Endothelial cell of umbilical vein (primary cell): ENCODE measurements at regions of chr19 and their contacts with region 1.

Region 1: GRCh38 chr19:14405758-14406644 is 13.1 kb downstream of the DDX39A start:
- DNase-seq: peak; percentile 93
- H3K4me3 ChIP-seq: peak overlapping the region in 1 of 3 experiments; percentile 9
- H3K27ac ChIP-seq: no peak overlapping the region
- H3K4me1 ChIP-seq: no peaks in the 10 kb centered on the region
- H3K27me3 ChIP-seq: no peaks in the 10 kb centered on the region
- CTCF ChIP-seq: peak; percentile 36 to 92
- POLR2A ChIP-seq: no peak

Region 2: DNA sequence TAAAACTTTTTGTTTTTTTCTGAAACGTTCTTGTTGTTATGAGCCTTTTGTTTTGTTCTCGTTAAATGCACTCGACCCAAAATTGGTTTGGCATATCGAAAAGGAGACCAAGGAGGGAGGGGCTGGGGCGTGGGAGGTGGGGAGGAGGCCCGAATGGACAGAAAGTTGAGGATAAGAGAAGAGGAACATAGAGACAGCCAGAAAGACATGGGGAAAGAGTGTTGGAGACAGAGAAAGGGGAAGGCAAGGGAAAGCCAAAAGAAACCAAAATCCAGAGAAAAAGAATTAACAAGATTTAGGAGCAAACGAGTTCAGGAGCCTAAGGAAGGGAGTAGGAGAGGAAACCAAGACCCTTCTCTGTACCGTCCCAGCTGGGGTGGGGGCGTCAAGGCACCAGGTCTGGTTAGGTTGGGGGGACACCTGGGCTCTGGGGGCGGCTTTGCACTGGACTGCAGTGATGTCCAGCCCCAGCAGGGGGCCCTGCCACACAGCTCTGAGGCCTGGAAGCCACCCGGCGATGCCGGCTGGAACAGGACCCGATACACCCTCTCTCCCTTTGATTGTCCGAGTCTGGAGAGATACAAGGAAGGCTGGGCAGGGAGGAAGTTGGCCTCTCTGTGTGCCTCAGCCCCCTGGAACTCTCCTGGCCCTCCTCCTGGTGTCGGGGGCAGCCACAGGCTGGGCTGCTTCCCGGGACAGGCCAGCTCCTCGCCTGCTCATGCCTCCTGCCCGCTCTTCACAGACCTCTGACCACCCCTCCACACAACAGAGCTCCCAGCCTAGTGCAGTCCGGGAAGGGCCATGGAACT is 258.0 kb before region 1 on chr19:
- CTCF ChIA-PET with region 1: interaction called, 16 read pairs
- POLR2A ChIA-PET with region 1: no interaction called
- dilution Hi-C with region 1: no loop called
- intact Hi-C with region 1: loop called (anchors 1 kb)
- DNase-seq: peak; percentile 77
- H3K4me3 ChIP-seq: no peak overlapping the region
- H3K27ac ChIP-seq: peak overlapping the region; percentile 43
- H3K4me1 ChIP-seq: peaks cover 24% of the 10 kb centered on the region
- H3K27me3 ChIP-seq: no peaks in the 10 kb centered on the region
- CTCF ChIP-seq: peak; percentile 86 to 98
- POLR2A ChIP-seq: no peak

Region 3: GRCh38 chr19:14198384-14199376 is 207.3 kb before region 1 on chr19:
- CTCF ChIA-PET with region 1: interaction called, 12 read pairs
- POLR2A ChIA-PET with region 1: no interaction called
- dilution Hi-C with region 1: no loop called
- intact Hi-C with region 1: loop called (anchors 1 kb)
- DNase-seq: no peak
- H3K4me3 ChIP-seq: no peak overlapping the region
- H3K27ac ChIP-seq: no peak overlapping the region
- H3K4me1 ChIP-seq: no peaks in the 10 kb centered on the region
- H3K27me3 ChIP-seq: no peaks in the 10 kb centered on the region
- CTCF ChIP-seq: peak in 1 of 2 donors; percentile 2
- POLR2A ChIP-seq: no peak

Region 4: DNA sequence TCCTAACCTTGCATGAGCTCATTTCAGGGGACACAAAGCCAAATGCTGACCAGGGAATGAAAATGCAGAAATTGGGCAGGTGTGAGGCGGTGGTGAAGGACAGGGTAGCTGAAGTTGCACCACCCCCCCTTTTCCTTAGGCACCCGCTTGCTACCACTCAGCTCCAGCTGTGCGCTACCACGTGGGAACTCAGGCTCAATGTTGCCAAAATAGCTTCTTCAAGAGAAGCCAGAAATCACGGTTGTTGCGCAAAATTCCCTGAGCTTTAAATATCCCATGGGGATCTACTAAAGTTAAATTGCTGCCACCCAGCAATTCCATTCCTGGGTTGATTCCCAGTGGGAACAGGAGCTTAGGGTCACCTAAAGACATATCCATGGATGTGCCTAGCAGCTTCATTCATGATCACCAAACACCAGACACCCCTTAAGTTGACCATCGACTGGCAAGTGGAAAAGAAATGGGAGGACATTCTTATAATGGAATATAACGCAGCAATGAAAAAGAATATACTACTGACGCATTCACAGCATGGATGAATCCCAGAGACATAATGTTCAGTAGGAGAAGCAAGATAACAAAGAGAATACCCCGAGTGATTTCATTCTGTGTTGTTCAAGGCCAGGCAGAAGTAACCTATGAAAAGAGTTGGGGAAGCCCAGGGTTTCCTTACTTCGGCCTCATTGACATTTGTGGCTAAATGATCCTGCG is 187.2 kb before region 1 on chr19:
- CTCF ChIA-PET with region 1: interaction called, 5 read pairs
- POLR2A ChIA-PET with region 1: no interaction called
- dilution Hi-C with region 1: no loop called
- intact Hi-C with region 1: loop called (anchors 2 kb)
- DNase-seq: no peak
- H3K4me3 ChIP-seq: no peak overlapping the region
- H3K27ac ChIP-seq: no peak overlapping the region
- H3K4me1 ChIP-seq: no peaks in the 10 kb centered on the region
- H3K27me3 ChIP-seq: no peaks in the 10 kb centered on the region
- CTCF ChIP-seq: no peak
- POLR2A ChIP-seq: no peak

Region 5: GRCh38 chr19:14363183-14364097 is 42.6 kb before region 1 on chr19:
- CTCF ChIA-PET with region 1: interaction called, 18 read pairs
- POLR2A ChIA-PET with region 1: no interaction called
- dilution Hi-C with region 1: no loop called
- intact Hi-C with region 1: loop called (anchors 1 kb)
- DNase-seq: peak; percentile 38
- H3K4me3 ChIP-seq: peak overlapping the region in 2 of 3 experiments; percentile 2 to 3
- H3K27ac ChIP-seq: no peak overlapping the region
- H3K4me1 ChIP-seq: peaks cover 5% of the 10 kb centered on the region
- H3K27me3 ChIP-seq: no peaks in the 10 kb centered on the region
- CTCF ChIP-seq: no peak
- POLR2A ChIP-seq: no peak

Region 6: GRCh38 chr19:14419106-14419813 is 13.3 kb after region 1 on chr19 and contains the start of gene DDX39A:
- CTCF ChIA-PET with region 1: interaction called, 7 read pairs
- POLR2A ChIA-PET with region 1: no interaction called
- dilution Hi-C with region 1: no loop called
- intact Hi-C with region 1: loop called (anchors 1 kb)
- DNase-seq: peak; percentile 99
- H3K4me3 ChIP-seq: peak within 1 kb of the TSS; percentile 78 to 98 (median 82)
- H3K27ac ChIP-seq: peak within 1 kb of the TSS; percentile 87
- H3K4me1 ChIP-seq: peaks cover 12% of the 10 kb centered on the region
- H3K27me3 ChIP-seq: no peaks in the 10 kb centered on the region
- CTCF ChIP-seq: no peak
- POLR2A ChIP-seq: peak; percentile 86
- total RNA-seq, gene DDX39A: 153 and 157 TPM in 2 replicates

Region 7: DNA sequence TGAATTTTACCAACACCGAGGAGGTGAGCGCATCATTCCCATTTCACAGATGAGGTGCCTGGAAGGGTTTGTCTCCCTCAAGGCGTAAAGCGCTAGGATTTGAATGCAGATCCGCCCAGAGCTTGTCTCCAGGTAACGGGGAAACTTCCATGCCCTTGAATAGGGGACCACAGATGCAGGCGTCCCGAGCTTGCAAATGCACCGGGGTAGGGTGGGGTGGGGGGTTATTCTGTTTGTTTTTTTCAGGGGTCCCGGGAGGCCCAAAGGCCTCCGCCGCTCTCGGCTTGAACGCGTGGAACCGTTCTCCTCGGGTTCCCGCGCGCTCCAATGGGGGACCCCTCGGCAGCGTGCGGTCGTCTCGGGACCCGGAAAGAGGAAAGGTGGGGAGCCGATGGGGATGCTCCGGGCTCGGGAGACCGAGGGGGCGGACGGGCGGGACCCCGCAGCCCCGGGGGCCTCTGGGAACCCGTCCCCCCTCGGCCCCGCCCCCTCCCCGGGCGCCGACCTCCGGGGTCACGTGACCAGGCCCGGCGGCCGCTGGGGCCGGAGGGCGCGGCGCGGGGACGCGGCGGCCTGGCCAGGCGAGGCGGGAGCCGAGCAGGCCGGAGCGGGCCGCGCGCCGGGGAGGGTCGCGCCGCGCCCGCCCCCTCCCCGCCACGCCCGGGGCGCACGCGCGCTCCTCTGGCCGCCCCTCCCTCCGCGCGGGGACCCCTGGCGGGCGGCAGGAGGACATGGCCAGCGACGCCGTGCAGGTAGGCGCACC is 27.0 kb after region 1 on chr19 and contains the start of gene PKN1:
- CTCF ChIA-PET with region 1: interaction called, 3 read pairs
- POLR2A ChIA-PET with region 1: no interaction called
- dilution Hi-C with region 1: no loop called
- intact Hi-C with region 1: loop called (anchors 1 kb)
- DNase-seq: peak; percentile 21
- H3K4me3 ChIP-seq: peak within 1 kb of the TSS; percentile 43 to 84 (median 79)
- H3K27ac ChIP-seq: peak within 1 kb of the TSS; percentile 78
- H3K4me1 ChIP-seq: peaks cover 27% of the 10 kb centered on the region
- H3K27me3 ChIP-seq: peaks cover 0 to 2% of the 10 kb centered on the region in 2 experiments
- CTCF ChIP-seq: no peak
- POLR2A ChIP-seq: peak; percentile 18
- total RNA-seq, gene PKN1: 302 and 326 TPM in 2 replicates

Region 8: GRCh38 chr19:14505488-14506432 is 99.8 kb after region 1 on chr19:
- CTCF ChIA-PET with region 1: no interaction called
- POLR2A ChIA-PET with region 1: no interaction called
- dilution Hi-C with region 1: no loop called
- intact Hi-C with region 1: no loop called
- DNase-seq: peak; percentile 28
- H3K4me3 ChIP-seq: no peak overlapping the region
- H3K27ac ChIP-seq: no peak overlapping the region
- H3K4me1 ChIP-seq: peaks cover 13% of the 10 kb centered on the region
- H3K27me3 ChIP-seq: peaks cover 0 to 2% of the 10 kb centered on the region in 2 experiments
- CTCF ChIP-seq: peak; percentile 71 to 83
- POLR2A ChIP-seq: no peak

Region 9: GRCh38 chr19:14519860-14520407 is 113.9 kb after region 1 on chr19:
- CTCF ChIA-PET with region 1: no interaction called
- POLR2A ChIA-PET with region 1: no interaction called
- dilution Hi-C with region 1: no loop called
- intact Hi-C with region 1: no loop called
- DNase-seq: peak; percentile 75
- H3K4me3 ChIP-seq: no peak overlapping the region
- H3K27ac ChIP-seq: peak overlapping the region; percentile 81
- H3K4me1 ChIP-seq: peaks cover 55% of the 10 kb centered on the region
- H3K27me3 ChIP-seq: no peaks in the 10 kb centered on the region
- CTCF ChIP-seq: no peak
- POLR2A ChIP-seq: no peak

Region 10: GRCh38 chr19:14689598-14690503 is 283.9 kb after region 1 on chr19 and contains the start of gene ZNF333:
- CTCF ChIA-PET with region 1: no interaction called
- POLR2A ChIA-PET with region 1: no interaction called
- dilution Hi-C with region 1: no loop called
- intact Hi-C with region 1: no loop called
- DNase-seq: peak; percentile 88
- H3K4me3 ChIP-seq: peak within 1 kb of the TSS; percentile 98 to 99 (median 99)
- H3K27ac ChIP-seq: peak within 1 kb of the TSS; percentile 95
- H3K4me1 ChIP-seq: peaks cover 9% of the 10 kb centered on the region
- H3K27me3 ChIP-seq: peaks cover 0 to 2% of the 10 kb centered on the region in 2 experiments
- CTCF ChIP-seq: no peak
- POLR2A ChIP-seq: peak; percentile 74
- total RNA-seq, gene ZNF333: 17.1 and 19.7 TPM in 2 replicates